CD8-positive, alpha-beta T cell (primary cell): ENCODE measurements at regions of chr4 and their contacts with region 1.

Region 1: DNA sequence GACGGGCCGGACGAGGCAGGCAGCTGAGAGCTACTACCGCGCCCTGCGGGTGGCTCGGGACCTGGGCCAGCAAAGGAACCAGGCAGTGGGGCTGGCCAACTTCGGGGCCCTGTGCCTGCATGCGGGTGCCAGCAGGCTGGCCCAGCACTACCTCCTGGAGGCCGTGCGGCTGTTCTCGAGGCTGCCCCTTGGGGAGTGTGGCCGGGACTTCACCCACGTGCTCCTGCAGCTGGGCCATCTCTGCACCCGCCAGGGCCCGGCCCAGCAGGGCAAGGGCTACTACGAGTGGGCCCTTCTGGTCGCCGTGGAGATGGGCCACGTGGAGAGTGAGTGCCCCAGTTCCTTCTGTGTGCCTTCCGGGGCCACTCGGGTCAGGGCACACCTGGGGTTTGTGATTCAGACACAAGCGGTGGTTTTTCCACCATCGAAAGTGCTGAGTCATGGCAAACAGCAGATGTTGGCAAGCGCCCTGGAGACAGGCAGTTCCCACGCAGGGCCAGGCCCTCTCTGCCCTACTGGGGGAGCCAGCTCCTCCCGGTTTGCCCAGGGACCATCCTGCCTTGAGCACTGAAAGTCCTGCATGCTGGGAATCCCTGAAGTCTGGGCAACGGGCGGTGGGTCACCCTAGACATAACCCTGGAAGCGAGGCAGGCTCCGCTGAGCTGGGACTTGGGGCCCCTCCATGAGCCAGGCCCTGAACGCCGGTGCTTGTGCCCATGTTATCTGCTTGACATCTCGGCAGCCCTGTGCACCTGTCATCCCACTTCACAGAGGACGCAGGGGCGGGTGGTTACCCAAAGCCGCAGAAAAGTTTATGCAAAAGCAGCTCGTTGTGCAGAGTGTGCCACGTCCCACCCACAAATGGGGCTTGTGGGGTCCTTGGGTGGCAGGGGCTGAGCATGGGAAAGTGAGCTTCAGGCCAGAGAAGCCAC is 29.5 kb downstream of the SH3TC1 start:
- DNase-seq: peak; percentile 47 to 90 (median 71)
- ATAC-seq: peak; percentile 80
- H3K4me3 ChIP-seq: peak overlapping the region; percentile 8 to 18
- H3K4me3 Mint-ChIP-seq: peak overlapping the region; percentile 65
- H3K27ac ChIP-seq: peak overlapping the region; percentile 6 to 16
- H3K27ac Mint-ChIP-seq: peak overlapping the region; percentile 90
- H3K4me1 ChIP-seq: peaks cover 59% of the 10 kb centered on the region
- H3K4me1 Mint-ChIP-seq: peaks cover 63% of the 10 kb centered on the region
- H3K27me3 ChIP-seq: peaks cover 0 to 2% of the 10 kb centered on the region in 2 experiments
- H3K27me3 Mint-ChIP-seq: no peaks in the 10 kb centered on the region
- CTCF ChIP-seq: no peak

Region 2: GRCh38 chr4:8192748-8193738 is 35.5 kb before region 1 on chr4:
- CTCF ChIA-PET with region 1: no interaction called
- POLR2A ChIA-PET with region 1: interaction called, 22 read pairs
- intact Hi-C with region 1: loop called in 1 of 2 experiments (anchors 5 kb)
- DNase-seq: peak in 5 of 9 experiments; percentile 21 to 77 (median 56)
- ATAC-seq: peak; percentile 93
- H3K4me3 ChIP-seq: no peak overlapping the region
- H3K4me3 Mint-ChIP-seq: no peak overlapping the region
- H3K27ac ChIP-seq: no peak overlapping the region
- H3K27ac Mint-ChIP-seq: peak overlapping the region; percentile 62
- H3K4me1 ChIP-seq: peaks cover 7% of the 10 kb centered on the region
- H3K4me1 Mint-ChIP-seq: peaks cover 11% of the 10 kb centered on the region
- H3K27me3 ChIP-seq: no peaks in the 10 kb centered on the region
- H3K27me3 Mint-ChIP-seq: no peaks in the 10 kb centered on the region
- CTCF ChIP-seq: no peak

Region 3: DNA sequence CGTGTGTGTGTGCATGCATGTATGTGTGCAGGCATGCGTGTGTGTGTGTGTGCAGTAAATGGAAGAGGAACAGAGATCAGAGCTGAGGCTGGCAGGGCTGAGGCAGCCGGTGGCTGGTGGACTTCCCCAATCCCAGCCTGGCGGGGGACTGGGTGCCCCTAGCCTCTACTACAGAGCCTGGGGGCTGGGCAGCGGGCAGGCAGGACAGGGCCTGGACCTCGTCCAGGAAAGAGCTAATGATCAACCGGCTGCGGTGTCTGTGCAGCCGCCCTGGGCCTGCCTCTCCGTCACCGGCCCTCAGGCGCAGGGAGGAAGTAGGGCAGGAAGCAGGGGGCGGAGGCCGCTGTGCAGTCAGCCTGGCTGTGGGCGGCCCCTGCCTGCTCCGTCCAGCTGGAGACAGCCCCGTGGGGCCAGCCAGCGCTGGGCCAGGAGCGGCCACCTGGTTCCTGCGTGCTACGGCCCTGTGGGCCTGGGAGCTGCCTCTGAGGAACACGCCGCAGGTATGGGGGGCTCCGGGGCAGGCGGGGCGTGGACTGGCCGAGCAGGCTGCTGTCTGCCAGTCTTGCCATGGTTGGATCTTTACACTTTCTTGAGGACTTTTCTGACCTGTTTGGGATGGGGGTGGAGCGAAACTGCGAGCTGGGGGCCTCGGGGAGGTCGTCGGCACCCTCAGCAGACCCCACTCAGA is 29.5 kb before region 1 on chr4 and contains the start of gene SH3TC1:
- CTCF ChIA-PET with region 1: interaction called, 3 read pairs
- POLR2A ChIA-PET with region 1: interaction called, 22 read pairs
- intact Hi-C with region 1: loop called (anchors 2 to 5 kb)
- DNase-seq: peak; percentile 19 to 83 (median 59)
- ATAC-seq: peak; percentile 52
- H3K4me3 ChIP-seq: peak within 1 kb of the TSS; percentile 63 to 69
- H3K4me3 Mint-ChIP-seq: peak within 1 kb of the TSS; percentile 97
- H3K27ac ChIP-seq: peak within 1 kb of the TSS; percentile 43 to 61
- H3K27ac Mint-ChIP-seq: peak within 1 kb of the TSS; percentile 97
- H3K4me1 ChIP-seq: peaks cover 47% of the 10 kb centered on the region
- H3K4me1 Mint-ChIP-seq: peaks cover 45% of the 10 kb centered on the region
- H3K27me3 ChIP-seq: no peaks in the 10 kb centered on the region
- H3K27me3 Mint-ChIP-seq: no peaks in the 10 kb centered on the region
- CTCF ChIP-seq: no peak
- total RNA-seq, gene SH3TC1: 90.7 to 102 TPM

Region 4: DNA sequence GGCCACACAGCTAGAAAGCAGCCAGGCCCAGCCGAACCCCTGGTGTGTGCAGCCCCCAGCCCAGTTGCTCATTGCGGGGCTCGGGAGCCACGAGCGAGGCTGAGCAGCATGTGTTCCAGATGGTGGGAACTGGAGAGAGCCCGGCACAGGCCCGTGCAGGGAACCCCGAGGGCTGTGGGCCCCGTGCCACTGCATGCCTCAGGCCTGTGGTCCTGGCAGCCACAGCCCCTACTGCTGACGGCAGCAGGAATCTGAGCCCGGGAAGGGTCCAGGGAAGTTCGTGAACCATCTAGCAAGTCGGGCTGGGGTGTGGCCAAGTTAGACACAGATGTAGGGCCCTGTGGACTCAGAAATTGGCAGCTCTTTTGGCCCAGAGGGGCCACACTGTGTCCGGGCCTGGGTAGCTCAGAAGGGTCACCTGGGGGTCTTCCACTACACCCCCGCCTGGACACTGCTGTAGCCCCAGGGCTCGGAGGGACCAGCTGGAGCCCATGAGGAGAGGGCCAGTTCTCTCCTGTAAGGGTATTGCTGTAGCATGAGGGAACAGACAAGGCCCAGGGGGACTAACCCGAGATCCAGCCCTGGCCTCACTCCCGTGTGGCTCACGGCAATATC is 53.0 kb after region 1 on chr4:
- CTCF ChIA-PET with region 1: no interaction called
- POLR2A ChIA-PET with region 1: no interaction called
- intact Hi-C with region 1: no loop called
- DNase-seq: no peak
- ATAC-seq: no peak
- H3K4me3 ChIP-seq: no peak overlapping the region
- H3K4me3 Mint-ChIP-seq: no peak overlapping the region
- H3K27ac ChIP-seq: no peak overlapping the region
- H3K27ac Mint-ChIP-seq: no peak overlapping the region
- H3K4me1 ChIP-seq: no peaks in the 10 kb centered on the region
- H3K4me1 Mint-ChIP-seq: no peaks in the 10 kb centered on the region
- H3K27me3 ChIP-seq: no peaks in the 10 kb centered on the region
- H3K27me3 Mint-ChIP-seq: no peaks in the 10 kb centered on the region
- CTCF ChIP-seq: no peak